Activated CD8-positive, alpha-beta T cell treated with anti-CD3 and anti-CD28 coated beads for 36 hours (primary cell): ENCODE measurements at regions of chr11 and their contacts with region 1.

Region 1: GRCh38 chr11:695538-696248 is at the start of gene TMEM80:
- DNase-seq: peak; percentile 99
- ATAC-seq: peak; percentile 79
- H3K4me3 Mint-ChIP-seq: peak within 1 kb of the TSS; percentile 88
- H3K27ac Mint-ChIP-seq: peak within 1 kb of the TSS; percentile 94
- H3K4me1 Mint-ChIP-seq: peaks cover 48% of the 10 kb centered on the region
- H3K27me3 Mint-ChIP-seq: no peaks in the 10 kb centered on the region
- CTCF ChIP-seq: no peak
- total RNA-seq, gene TMEM80: 10.6 to 12.5 TPM

Region 2: GRCh38 chr11:680476-680875 is 15.2 kb before region 1 on chr11:
- CTCF ChIA-PET with region 1: interaction called, 6 read pairs
- POLR2A ChIA-PET with region 1: interaction called, 20 read pairs
- intact Hi-C with region 1: no loop called
- DNase-seq: no peak
- ATAC-seq: no peak
- H3K4me3 Mint-ChIP-seq: no peak overlapping the region
- H3K27ac Mint-ChIP-seq: peak overlapping the region; percentile 57
- H3K4me1 Mint-ChIP-seq: peaks cover 12% of the 10 kb centered on the region
- H3K27me3 Mint-ChIP-seq: no peaks in the 10 kb centered on the region
- CTCF ChIP-seq: no peak